PC-3 (cell line): ENCODE measurements at regions of chr15 and their contacts with region 1.

Region 1: DNA sequence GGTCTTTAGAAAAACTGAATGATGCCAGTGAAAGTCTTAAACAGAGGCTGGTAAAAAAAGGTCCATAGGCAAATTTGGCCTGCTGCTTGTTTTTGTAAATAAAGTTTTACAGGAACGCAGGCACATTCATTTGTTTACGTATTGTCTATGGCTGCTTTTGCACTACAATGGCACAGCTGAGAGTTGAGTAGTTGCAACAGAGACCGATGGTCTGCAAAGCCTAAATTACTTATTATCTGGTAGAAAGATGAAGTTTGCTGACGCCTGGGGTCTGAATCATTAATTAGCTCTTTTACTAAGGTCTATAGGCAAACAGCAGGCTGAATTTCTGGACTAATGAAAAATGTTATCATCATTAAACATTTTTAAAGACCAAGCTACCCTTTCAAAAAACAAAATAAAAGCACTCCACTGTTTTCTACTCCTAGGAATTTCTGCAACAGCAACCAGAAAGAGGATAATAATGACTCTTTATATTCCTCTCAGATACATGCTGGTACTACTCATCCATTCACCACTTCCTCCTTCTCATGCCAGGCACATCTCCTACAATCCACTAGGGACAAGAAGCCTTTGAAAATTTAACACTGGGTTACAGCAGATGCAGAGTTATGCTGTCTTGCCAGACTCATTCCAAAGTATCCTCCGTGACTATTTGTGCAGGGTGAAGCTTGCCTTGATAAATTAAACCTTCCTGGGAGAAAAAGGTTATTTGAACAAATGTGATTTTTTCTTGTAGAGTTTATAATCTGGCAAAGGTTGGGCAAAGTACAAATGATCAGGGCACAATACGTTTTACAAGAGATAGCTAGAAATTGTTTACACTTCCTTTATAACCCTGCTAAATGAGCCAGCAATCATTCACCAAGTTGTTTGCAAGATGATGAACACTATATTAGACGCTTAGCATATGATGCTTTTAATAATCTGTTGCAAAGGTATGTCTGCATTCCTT is 6.0 kb downstream of the GATM start:
- DNase-seq: peak; percentile 50
- ATAC-seq: peak; percentile 97
- H3K4me3 ChIP-seq: no peak overlapping the region
- H3K27ac ChIP-seq: no peak overlapping the region
- H3K4me1 ChIP-seq: no peaks in the 10 kb centered on the region
- H3K27me3 ChIP-seq: peaks cover 15% of the 10 kb centered on the region
- CTCF ChIP-seq: no peak

Region 2: DNA sequence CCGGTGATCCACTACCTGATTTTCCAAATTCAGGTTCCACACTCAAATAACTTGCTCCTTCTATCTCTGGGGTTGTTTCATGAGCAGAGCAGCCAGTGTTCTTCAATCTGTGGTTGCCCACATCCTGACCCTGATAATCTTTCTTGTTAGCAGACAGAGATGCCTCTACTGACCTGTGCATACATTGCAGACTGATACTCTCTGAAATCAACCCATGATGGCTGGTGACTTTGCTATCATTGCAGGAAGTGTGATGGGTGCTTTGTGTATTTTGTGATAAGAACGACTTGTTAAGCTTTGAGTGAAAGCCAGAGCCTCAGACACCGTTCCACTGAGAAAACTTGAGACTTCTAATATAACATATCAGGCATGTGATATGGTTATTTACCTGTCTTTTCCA is 33.9 kb before region 1 on chr15:
- CTCF ChIA-PET with region 1: no interaction called
- POLR2A ChIA-PET with region 1: interaction called, 19 read pairs
- intact Hi-C with region 1: no loop called
- DNase-seq: no peak
- ATAC-seq: no peak
- H3K4me3 ChIP-seq: no peak overlapping the region
- H3K27ac ChIP-seq: no peak overlapping the region
- H3K4me1 ChIP-seq: peaks cover 3% of the 10 kb centered on the region
- H3K27me3 ChIP-seq: no peaks in the 10 kb centered on the region
- CTCF ChIP-seq: no peak

Region 3: DNA sequence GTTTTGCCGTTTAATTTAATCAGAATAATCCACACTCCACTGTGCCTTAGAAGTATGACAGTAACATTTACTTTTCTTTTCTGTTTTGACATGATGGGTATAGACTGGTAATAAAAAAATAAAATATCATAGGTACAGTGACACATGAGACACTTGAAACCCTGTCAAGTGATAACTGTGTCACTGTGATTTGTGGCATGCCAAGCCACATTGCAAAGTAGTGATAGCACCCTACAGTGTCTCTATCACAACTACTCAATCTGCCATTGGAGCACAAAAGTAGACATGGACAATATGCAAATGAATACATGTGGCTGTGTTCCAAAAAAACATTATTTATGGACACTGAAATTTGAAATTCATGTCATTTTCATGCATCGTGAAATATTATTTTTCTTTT is 16.5 kb before region 1 on chr15:
- CTCF ChIA-PET with region 1: no interaction called
- POLR2A ChIA-PET with region 1: no interaction called
- intact Hi-C with region 1: no loop called
- DNase-seq: no peak
- ATAC-seq: no peak
- H3K4me3 ChIP-seq: no peak overlapping the region
- H3K27ac ChIP-seq: no peak overlapping the region
- H3K4me1 ChIP-seq: no peaks in the 10 kb centered on the region
- H3K27me3 ChIP-seq: no peaks in the 10 kb centered on the region
- CTCF ChIP-seq: no peak